ENCODE measurements at regions of chr11 and their contacts with region 1.

Region 1: GRCh38 chr11:131874070-131874469 is 503.7 kb downstream of the NTM start:
- DNase-seq: no peak
- ATAC-seq: no peak
- H3K4me3 ChIP-seq: no peak overlapping the region
- H3K27ac ChIP-seq: no peak overlapping the region
- H3K4me1 ChIP-seq: no peaks in the 10 kb centered on the region
- H3K27me3 ChIP-seq: no peaks in the 10 kb centered on the region
- CTCF ChIP-seq: no peak

Region 2: GRCh38 chr11:131737357-131737756 is 136.7 kb before region 1 on chr11:
- CTCF ChIA-PET with region 1: no interaction called
- POLR2A ChIA-PET with region 1: interaction called, 10 read pairs
- in situ Hi-C with region 1: no loop called
- intact Hi-C with region 1: no loop called
- DNase-seq: no peak
- ATAC-seq: no peak
- H3K4me3 ChIP-seq: no peak overlapping the region
- H3K27ac ChIP-seq: no peak overlapping the region
- H3K4me1 ChIP-seq: no peaks in the 10 kb centered on the region
- H3K27me3 ChIP-seq: peaks cover 4% of the 10 kb centered on the region; the same call in 1 of the 2 replicates
- CTCF ChIP-seq: no peak